HCT116 (cell line): ENCODE measurements at regions of chr3 and their contacts with region 1.

Region 1: GRCh38 chr3:49673715-49674496 is at the start of gene APEH:
- DNase-seq: peak; percentile 97
- ATAC-seq: peak; percentile 82
- H3K4me3 ChIP-seq: peak within 1 kb of the TSS; percentile 90 to 98
- H3K27ac ChIP-seq: peak within 1 kb of the TSS; percentile 98
- H3K4me1 ChIP-seq: peaks cover 10 to 36% of the 10 kb centered on the region in 2 experiments; a peak in 3 of 4 replicates
- H3K27me3 ChIP-seq: no peaks in the 10 kb centered on the region
- CTCF ChIP-seq: no peak
- POLR2A ChIP-seq: peak; percentile 71
- RAD21 ChIP-seq: no peak
- total RNA-seq, gene APEH: 246 TPM

Region 2: DNA sequence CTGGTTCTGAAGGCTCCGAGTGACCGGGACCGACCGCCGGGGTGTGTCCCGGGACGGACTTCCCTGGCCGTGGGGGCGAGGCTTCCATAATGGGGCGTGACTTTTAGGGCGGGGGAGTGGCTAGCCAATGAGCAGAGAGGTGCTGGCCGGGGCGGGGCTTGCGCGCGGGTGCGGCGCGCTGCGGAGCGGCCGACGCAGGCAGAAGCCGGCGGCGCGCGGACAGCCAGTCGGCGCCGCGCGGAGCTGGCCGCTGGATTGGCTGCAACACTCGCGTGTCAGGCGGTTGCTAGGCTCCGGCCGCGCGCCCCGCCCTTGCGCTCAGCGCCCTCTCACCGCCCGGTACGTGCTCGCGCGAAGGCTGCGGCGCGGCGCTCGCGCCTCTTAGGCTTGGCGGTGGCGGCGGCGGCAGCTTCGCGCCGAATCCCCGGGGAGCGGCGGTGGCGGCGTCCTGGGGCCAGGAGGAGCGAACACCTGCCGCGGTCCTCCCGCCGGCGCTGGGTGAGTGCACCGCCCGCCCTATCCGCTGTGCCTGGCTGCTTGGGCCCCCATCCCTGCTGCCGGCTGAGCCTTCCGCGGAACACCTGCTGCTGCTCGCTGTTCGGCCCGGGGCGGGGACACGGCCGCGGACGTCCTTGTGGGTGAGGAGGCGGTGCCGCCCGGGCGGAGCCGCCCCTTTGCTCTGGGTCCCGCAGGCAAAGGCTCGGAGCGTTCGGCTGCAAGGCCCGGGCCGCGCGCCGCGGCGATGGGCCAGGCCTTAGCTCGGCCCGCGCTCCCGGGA is 203.8 kb before region 1 on chr3 and contains the start of gene DAG1:
- CTCF ChIA-PET with region 1: no interaction called
- POLR2A ChIA-PET with region 1: no interaction called
- RAD21 ChIA-PET with region 1: no interaction called
- intact Hi-C with region 1: loop called (anchors 5 kb)
- DNase-seq: peak; percentile 90
- ATAC-seq: peak; percentile 87
- H3K4me3 ChIP-seq: peak within 1 kb of the TSS; percentile 70 to 92
- H3K27ac ChIP-seq: peak within 1 kb of the TSS; percentile 95
- H3K4me1 ChIP-seq: peaks cover 35 to 46% of the 10 kb centered on the region in 2 experiments
- H3K27me3 ChIP-seq: no peaks in the 10 kb centered on the region
- CTCF ChIP-seq: no peak
- POLR2A ChIP-seq: peak; percentile 75
- RAD21 ChIP-seq: no peak
- total RNA-seq, gene DAG1: 99.9 TPM

Region 3: GRCh38 chr3:49566312-49566711 is 107.6 kb before region 1 on chr3:
- CTCF ChIA-PET with region 1: interaction called, 10 read pairs
- POLR2A ChIA-PET with region 1: no interaction called
- RAD21 ChIA-PET with region 1: no interaction called
- intact Hi-C with region 1: no loop called
- DNase-seq: peak; percentile 16
- ATAC-seq: peak; percentile 77
- H3K4me3 ChIP-seq: no peak overlapping the region
- H3K27ac ChIP-seq: no peak overlapping the region
- H3K4me1 ChIP-seq: peaks cover 0 to 4% of the 10 kb centered on the region in 2 experiments; a peak in 1 of 4 replicates
- H3K27me3 ChIP-seq: 0 out of 2 replicates have a peak, but pooled peaks cover 4% of the 10 kb centered on the region
- CTCF ChIP-seq: peak; percentile 55 to 66 (median 56); a peak in 4 of 6 replicates
- POLR2A ChIP-seq: no peak
- RAD21 ChIP-seq: peak; percentile 71

Region 4: DNA sequence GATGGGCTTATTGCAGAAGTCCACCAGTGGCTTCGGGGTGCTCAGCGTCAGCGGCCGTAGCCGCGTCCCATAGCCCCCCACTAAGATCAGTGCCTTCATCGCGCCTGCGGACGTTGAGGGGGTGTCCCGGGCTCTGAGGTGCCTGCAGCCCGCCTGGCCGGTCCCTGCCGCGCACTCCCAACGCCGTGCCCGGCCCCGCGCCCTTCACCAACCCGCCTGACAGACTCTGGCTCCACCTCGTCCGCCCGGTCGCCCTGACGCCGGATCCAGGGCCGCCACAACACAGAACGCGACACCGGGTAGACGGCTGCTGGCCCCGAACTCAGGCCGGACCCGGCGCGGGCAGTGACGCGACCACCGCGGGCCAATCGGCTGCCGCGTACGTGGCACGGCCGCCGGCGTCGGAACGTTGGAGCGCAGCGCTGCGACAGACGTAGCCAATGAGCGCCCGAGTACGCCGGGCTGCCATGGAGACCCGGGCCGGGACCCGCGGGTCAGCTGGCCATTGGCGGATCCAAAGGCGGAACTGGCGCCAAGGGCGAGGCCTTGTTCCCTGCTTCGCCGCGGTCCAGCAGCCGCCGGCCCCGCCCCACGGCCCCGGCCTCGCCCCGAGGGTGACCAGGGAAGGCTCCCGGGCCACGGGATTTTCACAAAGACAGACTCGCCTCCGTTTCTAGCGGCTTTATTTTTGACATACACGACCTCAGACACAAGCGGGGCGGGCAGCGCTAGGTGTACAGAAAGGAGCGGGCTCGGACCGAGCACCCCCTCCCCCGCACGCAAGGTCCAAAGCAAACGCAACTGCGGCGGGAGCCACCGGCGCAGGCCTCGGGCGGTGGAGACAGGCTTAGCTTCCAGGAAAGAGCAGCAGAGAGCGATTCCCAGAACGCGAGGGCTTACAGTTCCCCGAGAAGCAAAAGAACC is 50.0 kb after region 1 on chr3 and contains the start of gene GMPPB:
- CTCF ChIA-PET with region 1: no interaction called
- POLR2A ChIA-PET with region 1: no interaction called
- RAD21 ChIA-PET with region 1: no interaction called
- intact Hi-C with region 1: loop called (anchors 1 kb)
- DNase-seq: peak; percentile 92
- ATAC-seq: peak; percentile 85
- H3K4me3 ChIP-seq: peak within 1 kb of the TSS; percentile 95
- H3K27ac ChIP-seq: peak within 1 kb of the TSS; percentile 92
- H3K4me1 ChIP-seq: peaks cover 13 to 35% of the 10 kb centered on the region in 2 experiments; a peak in 3 of 4 replicates
- H3K27me3 ChIP-seq: no peaks in the 10 kb centered on the region
- CTCF ChIP-seq: no peak
- POLR2A ChIP-seq: peak; percentile 39
- RAD21 ChIP-seq: no peak
- total RNA-seq, gene GMPPB: 24.1 TPM